ENCODE measurements at regions of chr11 and their contacts with region 1.

Region 1: DNA sequence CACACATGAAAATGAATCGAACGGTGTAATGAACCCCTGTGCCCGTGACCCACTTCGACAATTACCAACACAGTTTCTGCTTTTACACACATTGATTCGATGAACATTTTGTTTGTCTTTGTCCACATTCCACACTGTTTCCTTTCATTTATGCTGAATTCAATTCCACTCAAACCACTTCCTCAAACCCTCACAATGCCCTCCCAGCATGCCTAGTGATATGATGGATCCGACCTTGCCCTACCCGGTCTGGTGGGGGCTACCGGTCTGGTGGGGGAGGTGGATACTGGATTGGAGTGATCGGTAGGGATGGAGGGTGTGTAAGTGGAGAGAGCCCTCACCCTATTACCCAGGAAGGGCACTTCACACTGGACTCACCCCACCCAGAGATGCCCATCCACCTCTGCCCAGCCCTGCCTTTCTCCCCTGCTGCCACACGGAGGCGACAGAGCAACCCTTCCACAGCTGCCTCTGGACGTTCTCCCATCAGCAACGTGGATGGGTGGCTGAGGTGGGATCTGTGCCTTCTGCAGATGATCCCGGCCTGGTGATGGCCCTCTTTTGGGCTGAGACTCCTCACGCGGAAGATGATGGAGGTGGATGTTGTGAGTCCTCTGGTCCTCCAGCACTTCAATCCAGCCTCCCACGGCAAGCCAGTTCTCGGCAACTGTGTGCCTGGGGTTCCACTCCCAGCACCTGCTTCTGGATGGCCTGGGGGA is 33.0 kb upstream of the P2RY2 start:
- DNase-seq: peak in 8 of 10 donors; percentile 24 to 68 (median 48)
- H3K4me3 ChIP-seq: no peak overlapping the region
- H3K27ac ChIP-seq: no peak overlapping the region
- H3K27me3 ChIP-seq: no peaks in the 10 kb centered on the region
- CTCF ChIP-seq: peak in 55 of 56 donors; percentile 18 to 81 (median 69)

Region 2: DNA sequence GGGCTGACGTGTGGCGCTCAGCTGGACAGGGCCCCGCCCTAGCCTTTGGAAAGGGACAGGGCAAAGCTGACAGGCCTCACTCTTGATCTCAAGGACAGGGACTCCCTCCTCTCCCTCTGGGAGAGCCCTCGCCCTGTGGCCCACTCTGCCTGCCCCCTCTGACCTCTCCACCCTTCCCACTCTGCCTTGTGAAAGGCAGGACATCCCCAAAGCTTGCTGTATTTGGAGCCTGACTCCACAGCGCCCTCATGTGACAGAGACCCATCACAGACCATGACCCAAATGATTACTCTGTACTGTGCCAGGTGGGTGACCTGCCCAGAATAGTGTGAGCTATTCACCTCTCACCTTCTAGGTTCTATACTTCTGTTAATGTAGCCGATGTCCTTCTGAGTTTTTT is 51.7 kb after region 1 on chr11:
- intact Hi-C with region 1: loop called (anchors 2 to 5 kb)
- DNase-seq: peak in 2 of 10 donors; percentile 13 to 31
- H3K4me3 ChIP-seq: no peak overlapping the region
- H3K27ac ChIP-seq: no peak overlapping the region
- H3K27me3 ChIP-seq: no peaks in the 10 kb centered on the region
- CTCF ChIP-seq: peak in 51 of 56 donors; percentile 9 to 63 (median 44)

Region 3: GRCh38 chr11:73242251-73243079 is 57.4 kb after region 1 on chr11:
- intact Hi-C with region 1: loop called (anchors 2 to 5 kb)
- DNase-seq: peak in 9 of 10 donors; percentile 41 to 86 (median 74)
- H3K4me3 ChIP-seq: peak overlapping the region in 48 of 59 donors; percentile 13 to 59 (median 40)
- H3K27ac ChIP-seq: peak overlapping the region in 4 of 59 donors; percentile 13 to 55 (median 43)
- H3K27me3 ChIP-seq: no peaks in the 10 kb centered on the region
- CTCF ChIP-seq: peak; percentile 50 to 98 (median 88)

Region 4: DNA sequence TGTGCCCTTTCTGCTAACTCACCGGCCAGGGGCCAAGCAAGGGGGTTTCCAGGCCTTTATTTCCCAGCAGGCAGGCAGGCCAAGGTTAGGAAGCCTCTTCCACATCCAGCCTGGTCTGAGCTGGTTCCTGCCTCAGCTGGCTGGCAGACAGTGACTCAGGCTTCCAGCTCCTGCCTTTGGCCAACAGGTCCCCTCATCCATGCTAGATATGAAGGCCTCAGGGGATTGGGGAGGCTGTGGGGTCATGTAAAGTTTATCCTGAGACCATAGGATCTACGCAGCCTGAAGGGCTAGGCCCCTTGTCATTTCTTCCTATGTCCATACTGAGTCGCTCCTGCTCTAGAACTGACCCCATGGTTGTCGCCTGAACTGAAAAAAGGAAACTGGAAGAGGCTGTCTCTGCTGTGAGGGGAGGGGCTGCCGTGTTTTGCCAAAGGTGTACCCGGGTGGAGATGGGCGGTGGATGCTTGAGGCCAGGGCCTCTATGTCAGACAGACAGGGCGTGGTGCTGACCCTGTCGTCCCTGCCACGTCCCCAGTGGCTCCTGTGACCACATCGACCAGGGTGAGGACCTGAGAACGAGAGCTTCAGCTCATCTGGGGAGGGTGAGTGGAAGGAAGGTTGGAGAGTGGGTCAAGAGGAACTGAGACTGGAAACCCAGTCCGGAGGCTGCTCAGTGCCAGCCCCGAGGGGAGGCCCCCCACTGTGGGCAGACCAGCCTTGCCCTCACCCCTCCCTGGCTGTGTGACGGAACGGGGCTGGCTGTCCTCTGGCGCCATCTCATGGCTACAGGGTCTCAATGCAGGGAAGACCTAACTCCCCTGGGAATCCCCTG is 104.0 kb after region 1 on chr11:
- intact Hi-C with region 1: loop called in 1 of 2 experiments (anchors 2 kb)
- DNase-seq: peak; percentile 37 to 78 (median 66)
- H3K4me3 ChIP-seq: peak overlapping the region in 35 of 59 donors; percentile 7 to 53 (median 29)
- H3K27ac ChIP-seq: peak overlapping the region in 33 of 59 donors; percentile 2 to 75 (median 48)
- H3K27me3 ChIP-seq: peaks cover 0 to 7% (median 0%) of the 10 kb centered on the region in 45 donors
- CTCF ChIP-seq: peak; percentile 67 to 95 (median 86)

Measured in dorsolateral prefrontal cortex (tissue), 120 donors.